ENCODE measurements at regions of chr1 and their contacts with region 1.

Region 1: DNA sequence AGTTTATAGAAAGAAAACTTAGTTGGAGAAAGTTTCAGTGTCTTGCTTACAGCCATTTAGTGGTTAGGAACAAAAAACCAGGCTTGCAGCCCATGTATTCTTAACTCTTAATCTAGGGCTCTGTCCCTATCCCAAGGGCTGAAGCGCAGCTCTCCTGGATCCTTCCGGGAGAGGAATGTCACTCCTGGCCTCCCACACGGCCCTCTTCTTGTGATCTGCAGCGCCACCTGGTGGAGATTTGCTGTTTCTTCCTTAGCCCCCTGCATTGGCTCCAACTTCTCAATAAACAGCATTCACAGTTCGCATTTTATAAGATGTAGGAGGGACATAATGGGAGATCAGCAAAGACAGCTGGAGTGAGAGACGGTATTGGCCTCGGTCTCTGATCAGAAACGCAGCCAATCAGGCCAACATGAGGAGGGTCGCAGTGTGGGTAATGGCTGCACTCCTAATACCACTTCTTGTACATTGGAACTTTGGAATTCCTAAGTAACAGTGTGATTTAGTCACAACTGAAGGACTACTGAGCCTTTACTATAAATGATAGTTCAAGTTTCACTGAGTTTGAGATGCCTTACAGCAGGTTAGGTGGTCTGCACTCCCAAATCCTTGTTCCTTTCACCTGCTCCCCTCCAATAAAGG is 283.4 kb downstream of the ASTN1 start:
- DNase-seq: peak; percentile 64 to 90
- H3K4me3 ChIP-seq: no peak overlapping the region
- H3K27ac ChIP-seq: no peak overlapping the region
- H3K4me1 ChIP-seq: no peaks in the 10 kb centered on the region
- H3K27me3 ChIP-seq: no peaks in the 10 kb centered on the region
- CTCF ChIP-seq: peak; percentile 67 to 93 (median 79)
- EP300 ChIP-seq: no peak
- POLR2A ChIP-seq: no peak
- RAD21 ChIP-seq: peak; percentile 88 to 92

Region 2: GRCh38 chr1:176765608-176766007 is 115.5 kb before region 1 on chr1:
- CTCF ChIA-PET with region 1: interaction called, 14 read pairs
- POLR2A ChIA-PET with region 1: no interaction called
- DNase-seq: no peak
- H3K4me3 ChIP-seq: no peak overlapping the region
- H3K27ac ChIP-seq: no peak overlapping the region
- H3K4me1 ChIP-seq: no peaks in the 10 kb centered on the region
- H3K27me3 ChIP-seq: no peaks in the 10 kb centered on the region
- CTCF ChIP-seq: peak; percentile 35 to 60 (median 42); a peak in 3 of 4 replicates
- EP300 ChIP-seq: no peak
- POLR2A ChIP-seq: no peak
- RAD21 ChIP-seq: peak; percentile 21 to 41; a peak in 2 of 4 replicates

Region 3: DNA sequence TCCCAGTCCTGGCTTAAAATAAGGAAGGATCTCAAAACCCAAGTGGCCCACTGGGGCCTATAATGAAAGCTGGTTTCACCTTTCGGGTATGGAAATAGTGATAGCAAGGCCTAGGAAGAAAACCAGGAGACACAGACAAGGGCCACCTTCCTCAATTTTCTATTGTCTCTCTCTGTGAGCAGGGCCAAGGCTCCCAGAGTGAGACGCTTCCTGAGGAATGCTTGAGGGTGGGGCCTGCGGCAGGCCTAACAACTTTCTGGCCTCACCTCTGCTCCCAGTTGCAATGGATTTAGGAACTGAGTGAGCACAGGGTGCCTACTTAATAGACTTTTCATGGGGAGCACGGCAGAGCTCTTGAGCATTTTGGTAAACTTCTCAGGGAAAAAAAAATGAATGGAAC is 17.5 kb before region 1 on chr1:
- CTCF ChIA-PET with region 1: interaction called, 13 read pairs
- POLR2A ChIA-PET with region 1: no interaction called
- DNase-seq: no peak
- H3K4me3 ChIP-seq: no peak overlapping the region
- H3K27ac ChIP-seq: no peak overlapping the region
- H3K4me1 ChIP-seq: no peaks in the 10 kb centered on the region
- H3K27me3 ChIP-seq: no peaks in the 10 kb centered on the region
- CTCF ChIP-seq: no peak
- EP300 ChIP-seq: no peak
- POLR2A ChIP-seq: no peak
- RAD21 ChIP-seq: no peak

Region 4: GRCh38 chr1:177082855-177083693 is 202.0 kb after region 1 on chr1:
- CTCF ChIA-PET with region 1: no interaction called
- POLR2A ChIA-PET with region 1: no interaction called
- DNase-seq: no peak
- H3K4me3 ChIP-seq: no peak overlapping the region
- H3K27ac ChIP-seq: no peak overlapping the region
- H3K4me1 ChIP-seq: no peaks in the 10 kb centered on the region
- H3K27me3 ChIP-seq: no peaks in the 10 kb centered on the region
- CTCF ChIP-seq: no peak
- EP300 ChIP-seq: no peak
- POLR2A ChIP-seq: no peak
- RAD21 ChIP-seq: no peak